ENCODE measurements at regions of chr4 and their contacts with region 1.

Region 1: DNA sequence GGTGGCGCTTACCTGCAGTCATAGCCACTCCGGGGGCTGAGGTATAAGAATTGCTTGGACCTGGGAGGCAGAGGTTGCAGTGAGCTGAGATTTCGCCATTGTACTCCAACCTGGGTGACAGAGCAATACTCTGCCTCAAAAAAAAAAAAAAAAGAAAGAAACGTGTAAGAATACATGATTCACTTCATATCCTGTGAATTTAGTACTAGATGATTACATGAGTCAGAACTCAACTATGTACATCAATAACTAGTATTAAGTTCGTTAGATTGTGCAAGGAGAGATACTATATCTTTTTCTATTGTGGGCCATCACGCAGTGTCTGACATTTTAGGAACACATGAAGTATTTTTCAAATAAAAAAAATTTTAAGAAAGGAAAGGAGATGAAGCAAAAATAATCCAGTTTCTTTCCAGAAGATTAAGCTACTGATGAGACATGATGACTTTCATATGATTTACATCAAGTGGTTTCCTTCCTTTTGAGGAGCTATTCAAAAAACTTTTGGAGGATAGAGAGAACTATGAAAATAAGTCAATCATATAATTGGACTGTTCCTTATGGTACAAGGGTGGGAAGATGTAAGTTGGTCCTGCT is 64.7 kb upstream of the EXOC1L start:
- DNase-seq: peak; percentile 64
- H3K4me3 Mint-ChIP-seq: no peak overlapping the region
- H3K27ac Mint-ChIP-seq: peak overlapping the region; percentile 70
- H3K4me1 Mint-ChIP-seq: peaks cover 26% of the 10 kb centered on the region
- H3K27me3 Mint-ChIP-seq: no peaks in the 10 kb centered on the region
- CTCF ChIP-seq: no peak

Region 2: DNA sequence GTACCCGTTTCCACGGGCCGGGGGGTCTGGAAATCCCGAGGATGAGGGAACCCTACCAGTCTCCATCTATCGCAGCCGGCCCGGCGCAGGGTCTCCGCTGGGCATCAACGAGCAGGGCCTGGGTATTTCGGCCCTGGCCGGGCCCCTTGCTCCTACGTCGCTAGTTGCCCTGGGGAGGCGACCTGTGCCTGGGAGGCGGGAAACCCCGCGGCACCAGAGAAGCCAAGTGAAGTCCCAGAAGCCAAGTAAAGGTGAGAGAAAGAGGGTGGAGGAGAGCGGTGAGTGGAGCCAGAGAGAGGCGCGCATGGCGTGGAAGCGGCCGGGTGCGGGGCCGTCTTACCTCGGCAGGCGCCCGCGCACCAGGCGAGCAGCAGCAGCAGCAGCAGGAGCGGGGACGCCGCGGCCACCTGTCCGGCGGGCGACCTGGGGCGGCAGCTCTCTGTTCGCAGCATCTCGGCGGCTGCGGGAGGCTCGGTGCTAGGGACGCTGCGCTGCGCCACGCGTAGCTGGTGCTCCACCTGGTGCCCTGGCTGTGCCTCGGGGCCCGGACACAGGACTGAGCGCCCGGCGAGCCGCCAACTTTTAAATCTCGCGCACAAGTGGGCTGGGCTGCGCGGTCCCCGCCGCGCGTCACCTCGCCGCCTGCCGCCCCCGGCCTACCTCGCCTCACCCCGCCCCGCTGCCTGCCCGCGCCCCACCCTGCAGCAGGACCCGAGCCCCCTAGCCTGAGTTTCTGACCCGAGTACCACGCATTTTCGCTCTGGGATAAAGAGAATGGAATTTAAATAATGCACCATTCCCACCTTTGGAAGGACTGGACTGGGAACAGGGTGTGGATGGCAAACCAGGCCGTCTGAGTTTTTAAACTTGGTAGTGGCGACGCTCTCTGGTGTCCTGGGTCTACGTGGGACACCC is 118.9 kb before region 1 on chr4 and contains the start of gene NMU:
- CTCF ChIA-PET with region 1: no interaction called
- POLR2A ChIA-PET with region 1: no interaction called
- intact Hi-C with region 1: no loop called
- DNase-seq: peak; percentile 82
- H3K4me3 Mint-ChIP-seq: peak within 1 kb of the TSS; percentile 71
- H3K27ac Mint-ChIP-seq: no peak within 1 kb of the TSS
- H3K4me1 Mint-ChIP-seq: peaks cover 23% of the 10 kb centered on the region
- H3K27me3 Mint-ChIP-seq: no peaks in the 10 kb centered on the region
- CTCF ChIP-seq: peak; percentile 17
- total RNA-seq, gene NMU: 4.7 and 8.5 TPM in 2 replicates

Region 3: GRCh38 chr4:55853484-55854046 is 98.7 kb after region 1 on chr4 and contains the start of gene EXOC1:
- CTCF ChIA-PET with region 1: no interaction called
- POLR2A ChIA-PET with region 1: interaction called, 10 read pairs
- intact Hi-C with region 1: no loop called
- DNase-seq: peak; percentile 97
- H3K4me3 Mint-ChIP-seq: no peak within 1 kb of the TSS
- H3K27ac Mint-ChIP-seq: peak within 1 kb of the TSS; percentile 90
- H3K4me1 Mint-ChIP-seq: peaks cover 14% of the 10 kb centered on the region
- H3K27me3 Mint-ChIP-seq: no peaks in the 10 kb centered on the region
- CTCF ChIP-seq: no peak
- total RNA-seq, gene EXOC1: 31.4 and 39.5 TPM in 2 replicates

Measured in MCF 10A (cell line).